SK-N-SH (cell line): ENCODE measurements at regions of chr6 and their contacts with region 1.

Region 1: GRCh38 chr6:156953479-156954146 is 176.4 kb downstream of the ARID1B start:
- DNase-seq: peak; percentile 89
- H3K4me3 ChIP-seq: peak overlapping the region; percentile 35 to 55; a peak in 3 of 4 replicates
- H3K27ac ChIP-seq: peak overlapping the region; percentile 88 to 90
- H3K4me1 ChIP-seq: peaks cover 32 to 35% of the 10 kb centered on the region in 2 experiments; a peak in 3 of 4 replicates
- H3K27me3 ChIP-seq: no peaks in the 10 kb centered on the region
- CTCF ChIP-seq: peak; percentile 38
- EP300 ChIP-seq: no peak
- RAD21 ChIP-seq: peak; percentile 68

Region 2: GRCh38 chr6:156471000-156471399 is 482.6 kb before region 1 on chr6:
- CTCF ChIA-PET with region 1: no interaction called
- POLR2A ChIA-PET with region 1: no interaction called
- DNase-seq: no peak
- H3K4me3 ChIP-seq: no peak overlapping the region
- H3K27ac ChIP-seq: no peak overlapping the region
- H3K4me1 ChIP-seq: no peaks in the 10 kb centered on the region
- H3K27me3 ChIP-seq: no peaks in the 10 kb centered on the region
- CTCF ChIP-seq: no peak
- EP300 ChIP-seq: no peak
- RAD21 ChIP-seq: no peak

Region 3: GRCh38 chr6:156816505-156816904 is 137.1 kb before region 1 on chr6:
- CTCF ChIA-PET with region 1: no interaction called
- POLR2A ChIA-PET with region 1: no interaction called
- DNase-seq: no peak
- H3K4me3 ChIP-seq: no peak overlapping the region
- H3K27ac ChIP-seq: no peak overlapping the region
- H3K4me1 ChIP-seq: peaks cover 0 to 14% of the 10 kb centered on the region in 2 experiments; a peak in 3 of 4 replicates
- H3K27me3 ChIP-seq: no peaks in the 10 kb centered on the region
- CTCF ChIP-seq: no peak
- EP300 ChIP-seq: no peak
- RAD21 ChIP-seq: no peak

Region 4: GRCh38 chr6:156942266-156942665 is 11.3 kb before region 1 on chr6:
- CTCF ChIA-PET with region 1: interaction called, 21 read pairs
- POLR2A ChIA-PET with region 1: interaction called, 5 read pairs
- DNase-seq: no peak
- H3K4me3 ChIP-seq: no peak overlapping the region
- H3K27ac ChIP-seq: no peak overlapping the region
- H3K4me1 ChIP-seq: peaks cover 6 to 11% of the 10 kb centered on the region in 2 experiments; a peak in 3 of 4 replicates
- H3K27me3 ChIP-seq: no peaks in the 10 kb centered on the region
- CTCF ChIP-seq: no peak
- EP300 ChIP-seq: no peak
- RAD21 ChIP-seq: no peak

Region 5: DNA sequence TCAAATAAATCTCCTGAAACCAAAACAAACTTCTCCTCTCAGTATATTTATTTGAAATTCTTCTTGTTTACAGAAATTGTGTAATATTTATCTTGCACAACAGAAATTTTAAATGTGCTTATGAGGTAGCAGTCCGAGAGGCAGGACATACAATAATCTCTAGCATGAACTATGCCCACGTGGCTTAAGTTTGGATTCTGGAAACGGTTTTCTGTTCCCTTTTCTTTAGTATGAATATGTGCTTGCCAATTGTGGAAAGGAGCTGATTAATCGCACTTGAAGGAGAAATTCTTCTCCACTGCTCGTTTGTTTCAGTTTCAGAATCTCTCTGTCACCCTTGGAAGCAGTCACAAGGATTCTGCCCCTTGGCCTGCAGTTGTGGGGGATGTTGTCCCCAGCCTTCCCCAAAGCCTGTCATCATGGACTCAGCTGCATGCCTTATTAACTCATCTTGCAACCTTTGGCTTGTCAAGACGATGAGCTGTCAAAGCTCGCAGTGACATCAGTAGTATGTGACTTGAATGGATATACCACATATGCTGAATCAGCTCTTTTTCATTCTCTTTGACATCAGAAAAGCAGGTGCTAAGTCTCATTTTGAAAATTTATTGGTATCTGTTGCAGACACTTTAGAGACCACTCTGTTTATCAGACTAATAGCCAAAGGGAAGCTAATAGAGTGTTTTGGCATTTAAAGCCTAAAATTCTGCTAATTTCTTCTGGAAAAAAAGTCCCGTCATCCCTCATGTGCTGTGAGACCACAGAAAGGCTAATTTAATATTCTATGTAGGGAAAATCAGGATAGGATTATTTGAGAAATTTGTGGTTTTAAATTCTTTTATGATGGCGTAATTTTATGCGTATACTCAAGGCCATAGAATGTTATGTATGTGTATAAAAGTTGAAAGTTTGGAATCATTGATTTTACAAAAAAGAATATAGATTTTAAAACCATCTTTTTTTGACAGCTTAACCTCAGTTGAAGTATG is 10.4 kb after region 1 on chr6:
- CTCF ChIA-PET with region 1: interaction called, 10 read pairs
- POLR2A ChIA-PET with region 1: no interaction called
- DNase-seq: no peak
- H3K4me3 ChIP-seq: no peak overlapping the region
- H3K27ac ChIP-seq: no peak overlapping the region; a peak in 1 of 4 replicates
- H3K4me1 ChIP-seq: peaks cover 0 to 7% of the 10 kb centered on the region in 2 experiments; a peak in 3 of 4 replicates
- H3K27me3 ChIP-seq: no peaks in the 10 kb centered on the region
- CTCF ChIP-seq: no peak
- EP300 ChIP-seq: no peak
- RAD21 ChIP-seq: no peak

Region 6: GRCh38 chr6:157123234-157123633 is 169.6 kb after region 1 on chr6:
- CTCF ChIA-PET with region 1: no interaction called
- POLR2A ChIA-PET with region 1: no interaction called
- DNase-seq: no peak
- H3K4me3 ChIP-seq: no peak overlapping the region
- H3K27ac ChIP-seq: no peak overlapping the region; a peak in 1 of 4 replicates
- H3K4me1 ChIP-seq: peaks cover 0 to 7% of the 10 kb centered on the region in 2 experiments; a peak in 1 of 4 replicates
- H3K27me3 ChIP-seq: no peaks in the 10 kb centered on the region
- CTCF ChIP-seq: no peak
- EP300 ChIP-seq: no peak
- RAD21 ChIP-seq: no peak

Region 7: DNA sequence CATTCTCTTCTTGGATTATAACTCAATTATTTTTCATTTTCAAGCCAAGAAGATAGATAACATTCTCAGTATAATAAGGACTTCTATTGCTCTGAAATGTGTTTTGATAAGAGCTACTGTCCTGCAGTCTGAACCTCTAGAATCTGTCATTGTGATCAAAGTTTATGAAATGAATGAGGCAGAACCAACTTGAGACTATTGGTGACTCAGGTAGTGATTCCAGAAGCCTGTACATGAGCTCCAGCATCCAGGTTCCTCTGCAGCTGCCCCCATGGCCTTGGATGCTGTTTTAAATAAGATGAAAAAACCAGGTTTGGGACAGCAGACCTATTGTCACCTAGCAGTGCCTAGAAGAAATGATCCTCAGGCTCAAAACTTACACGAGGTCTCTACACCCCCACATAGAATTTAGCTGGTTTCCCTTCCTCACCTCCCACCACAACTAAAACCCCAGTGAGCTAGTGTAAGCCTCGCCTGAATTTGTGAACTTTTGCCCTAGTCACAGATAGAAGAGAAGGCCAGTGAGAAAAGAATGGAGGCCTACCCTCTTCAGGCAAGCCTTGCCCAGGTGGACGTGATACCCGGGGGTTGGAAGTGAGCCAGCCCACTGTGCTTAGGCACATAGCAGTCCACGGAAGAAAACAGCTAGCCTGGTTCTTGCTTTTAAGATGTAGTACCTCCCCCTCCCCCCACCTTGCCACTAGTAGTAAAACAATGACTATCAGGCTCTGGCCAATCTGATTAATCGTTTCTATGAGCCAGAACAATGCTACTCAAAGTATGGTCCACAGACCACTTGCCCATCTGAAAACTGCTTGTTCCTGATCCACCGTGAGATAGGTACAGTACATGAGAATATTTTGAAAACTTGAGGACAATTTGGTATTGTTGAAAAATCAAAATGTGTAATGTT is 955.0 kb after region 1 on chr6:
- CTCF ChIA-PET with region 1: no interaction called
- POLR2A ChIA-PET with region 1: no interaction called
- DNase-seq: no peak
- H3K4me3 ChIP-seq: no peak overlapping the region
- H3K27ac ChIP-seq: no peak overlapping the region; a peak in 1 of 4 replicates
- H3K4me1 ChIP-seq: peaks cover 13 to 19% of the 10 kb centered on the region in 2 experiments; a peak in 3 of 4 replicates
- H3K27me3 ChIP-seq: no peaks in the 10 kb centered on the region
- CTCF ChIP-seq: no peak
- EP300 ChIP-seq: no peak
- RAD21 ChIP-seq: no peak